Activated CD4-positive, alpha-beta memory T cell treated with anti-CD3 and anti-CD28 coated beads, Interleukin-2, amount 10 ng/mL, durations not matched to agents 7 days and 5 days (primary cell): ENCODE measurements at regions of chr1 and their contacts with region 1.

Region 1: DNA sequence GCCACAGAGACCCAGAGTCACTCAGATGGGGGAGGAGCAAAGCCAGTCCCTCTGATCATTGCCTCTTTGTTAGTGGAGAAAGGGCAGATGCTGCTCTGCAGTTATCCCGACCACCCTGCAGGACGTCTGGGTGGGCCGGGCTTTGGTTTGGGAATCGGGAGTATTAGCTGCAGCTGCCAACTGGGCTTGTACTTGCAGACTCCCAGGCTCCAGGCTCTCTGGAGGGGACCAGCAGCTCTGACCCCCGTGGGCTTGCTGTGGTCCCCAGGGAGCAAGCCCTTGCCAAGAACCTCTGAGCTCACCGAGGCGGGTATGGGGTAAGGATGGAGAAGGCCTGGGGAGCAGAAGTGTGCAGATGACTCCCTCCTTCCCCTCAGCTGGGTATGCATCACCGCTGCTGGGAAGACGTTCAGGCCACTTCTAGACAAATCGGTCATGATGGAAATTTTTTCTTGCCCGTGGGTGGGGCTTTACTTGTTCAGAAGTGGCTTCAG is 21.6 kb downstream of the MAPKAPK2 start:
- DNase-seq: no peak
- H3K4me3 Mint-ChIP-seq: no peak overlapping the region
- H3K27ac Mint-ChIP-seq: no peak overlapping the region
- H3K4me1 Mint-ChIP-seq: peaks cover 79% of the 10 kb centered on the region
- H3K27me3 Mint-ChIP-seq: no peaks in the 10 kb centered on the region

Region 2: GRCh38 chr1:206693029-206693428 is 13.3 kb before region 1 on chr1:
- CTCF ChIA-PET with region 1: no interaction called
- POLR2A ChIA-PET with region 1: interaction called, 11 read pairs
- DNase-seq: no peak
- H3K4me3 Mint-ChIP-seq: no peak overlapping the region
- H3K27ac Mint-ChIP-seq: no peak overlapping the region
- H3K4me1 Mint-ChIP-seq: peaks cover 54% of the 10 kb centered on the region
- H3K27me3 Mint-ChIP-seq: no peaks in the 10 kb centered on the region

Region 3: GRCh38 chr1:206716870-206717673 is 10.7 kb after region 1 on chr1:
- CTCF ChIA-PET with region 1: interaction called, 3 read pairs
- POLR2A ChIA-PET with region 1: interaction called, 18 read pairs
- DNase-seq: peak; percentile 52
- H3K4me3 Mint-ChIP-seq: no peak overlapping the region
- H3K27ac Mint-ChIP-seq: peak overlapping the region; percentile 80
- H3K4me1 Mint-ChIP-seq: peaks cover 78% of the 10 kb centered on the region
- H3K27me3 Mint-ChIP-seq: no peaks in the 10 kb centered on the region

Region 4: DNA sequence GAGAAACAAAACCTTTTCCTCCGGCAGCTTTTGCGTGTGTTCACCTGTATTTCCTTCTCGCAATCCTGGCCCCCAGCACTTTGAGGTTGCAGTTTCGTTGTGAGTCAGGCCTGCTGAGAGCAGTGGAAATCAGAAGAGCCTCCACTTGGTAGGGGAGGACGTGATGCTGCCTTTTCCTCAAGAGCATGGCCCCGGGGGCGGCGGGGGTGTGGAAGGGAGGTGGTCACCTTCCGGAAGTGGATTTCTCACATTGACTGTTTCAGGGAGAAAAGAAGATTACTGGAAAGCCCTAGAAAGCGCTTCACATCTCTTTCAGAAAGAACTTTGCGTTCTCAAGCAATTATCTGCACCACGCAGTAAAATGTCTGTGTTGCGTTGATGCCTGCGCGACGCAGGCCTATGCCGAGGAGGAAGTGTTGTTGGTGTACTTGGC is 78.1 kb after region 1 on chr1:
- CTCF ChIA-PET with region 1: no interaction called
- POLR2A ChIA-PET with region 1: no interaction called
- DNase-seq: peak; percentile 94
- H3K4me3 Mint-ChIP-seq: peak overlapping the region; percentile 53
- H3K27ac Mint-ChIP-seq: peak overlapping the region; percentile 90
- H3K4me1 Mint-ChIP-seq: peaks cover 64% of the 10 kb centered on the region
- H3K27me3 Mint-ChIP-seq: peaks cover 22% of the 10 kb centered on the region

Region 5: DNA sequence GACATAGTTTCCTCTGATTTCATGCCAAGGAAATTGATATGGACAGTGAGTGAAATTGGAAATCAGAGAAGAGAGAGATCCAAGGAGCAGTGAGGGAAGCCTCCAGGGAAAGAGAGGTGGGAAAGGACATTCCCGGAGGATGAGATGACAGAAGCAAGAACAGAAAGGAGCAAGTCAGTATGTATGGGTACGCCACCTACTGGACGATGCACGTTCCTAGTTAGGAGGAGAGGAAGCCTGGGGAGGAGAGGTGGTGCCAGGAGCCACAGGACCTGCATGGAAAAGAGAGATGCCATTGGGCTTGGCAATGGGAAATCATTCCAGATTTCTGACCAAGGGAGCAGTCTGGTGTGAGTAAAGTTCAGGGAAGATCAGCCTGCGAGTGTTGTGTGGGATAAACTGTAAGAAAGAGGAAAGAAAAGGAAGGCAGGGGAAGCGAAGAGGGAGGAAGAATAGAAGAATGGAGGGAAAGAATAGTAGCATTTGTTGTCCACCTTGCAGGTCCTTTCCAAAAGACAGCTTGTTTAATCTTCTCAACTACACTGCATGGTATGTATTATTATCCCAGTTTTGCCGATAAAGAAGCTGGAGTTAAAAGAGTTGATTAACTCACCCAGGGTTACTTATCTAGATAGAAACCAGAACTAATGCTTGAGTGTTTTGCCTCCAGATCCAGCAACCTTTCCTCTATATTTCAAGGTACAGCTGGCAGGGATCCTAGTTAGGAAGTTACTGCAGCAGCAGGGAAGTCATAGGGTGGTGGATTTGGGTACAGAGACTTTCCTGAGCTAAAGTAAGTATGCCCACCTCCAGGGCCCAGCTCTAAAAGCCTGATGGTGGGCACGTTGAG is 298.9 kb after region 1 on chr1:
- CTCF ChIA-PET with region 1: no interaction called
- POLR2A ChIA-PET with region 1: no interaction called
- DNase-seq: peak; percentile 45
- H3K4me3 Mint-ChIP-seq: no peak overlapping the region
- H3K27ac Mint-ChIP-seq: no peak overlapping the region
- H3K4me1 Mint-ChIP-seq: peaks cover 1% of the 10 kb centered on the region
- H3K27me3 Mint-ChIP-seq: peaks cover 36% of the 10 kb centered on the region